ENCODE measurements at regions of chr18 and their contacts with region 1.

Region 1: GRCh38 chr18:32018331-32019250 is at the start of gene RNF125:
- DNase-seq: peak; percentile 39 to 58
- ATAC-seq: peak; percentile 87 to 95
- H3K4me3 ChIP-seq: peak within 1 kb of the TSS; percentile 50
- H3K27ac ChIP-seq: peak within 1 kb of the TSS; percentile 54 to 77; a peak in 5 of 6 replicates
- H3K4me1 ChIP-seq: no peaks in the 10 kb centered on the region
- CTCF ChIP-seq: no peak
- EP300 ChIP-seq: no peak
- POLR2A ChIP-seq: no peak
- RAD21 ChIP-seq: no peak
- polyA plus RNA-seq, gene RNF125: 0.30 and 0.81 TPM in 2 replicates

Region 2: GRCh38 chr18:32060026-32060425 is 41.4 kb after region 1 on chr18:
- CTCF ChIA-PET with region 1: no interaction called
- POLR2A ChIA-PET with region 1: interaction called, 16 read pairs
- DNase-seq: no peak
- ATAC-seq: no peak
- H3K4me3 ChIP-seq: no peak overlapping the region
- H3K27ac ChIP-seq: no peak overlapping the region
- H3K4me1 ChIP-seq: no peaks in the 10 kb centered on the region
- CTCF ChIP-seq: no peak
- EP300 ChIP-seq: no peak
- POLR2A ChIP-seq: no peak
- RAD21 ChIP-seq: no peak